B cell (primary cell): ENCODE measurements at regions of chrX and their contacts with region 1.

Region 1: DNA sequence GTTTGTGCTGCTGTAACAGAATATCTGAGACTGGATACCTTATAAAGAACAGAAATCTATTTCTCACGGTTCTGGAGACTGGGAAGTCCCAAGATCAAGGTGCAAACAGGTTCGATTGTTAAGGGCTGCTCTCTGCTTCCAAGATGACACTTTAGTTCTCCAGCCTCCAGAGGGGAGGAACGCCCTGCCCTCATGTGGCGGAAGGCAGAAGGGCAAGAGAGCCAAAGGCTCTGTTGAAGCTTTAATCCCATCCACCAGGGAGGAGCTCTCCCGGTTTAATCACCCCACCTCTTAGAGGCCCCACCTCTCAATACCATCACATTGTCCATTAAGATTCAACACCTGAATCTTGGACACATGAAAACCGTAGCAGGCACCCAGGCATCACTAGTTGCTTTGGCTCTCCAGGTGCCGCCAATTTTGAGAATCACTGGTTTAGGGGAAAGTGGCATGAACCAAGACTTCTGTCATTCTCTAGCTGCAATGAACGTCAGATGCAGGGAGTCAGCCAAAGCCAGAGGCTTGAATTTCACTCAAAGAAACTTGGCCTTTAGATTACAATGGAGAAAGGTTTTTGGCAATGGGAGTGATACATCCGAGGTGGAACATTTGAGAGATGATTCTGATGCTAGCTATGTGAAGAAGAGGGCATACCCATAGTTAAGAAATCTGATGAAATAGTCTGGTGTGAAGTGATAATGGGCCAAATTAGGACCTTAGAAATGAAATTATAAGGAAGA is 15.7 kb downstream of the FHL1 start:
- DNase-seq: peak; percentile 40
- ATAC-seq: peak; percentile 49
- H3K4me3 ChIP-seq: no peak overlapping the region
- H3K4me3 Mint-ChIP-seq: no peak overlapping the region
- H3K27ac ChIP-seq: no peak overlapping the region
- H3K27ac Mint-ChIP-seq: no peak overlapping the region
- H3K4me1 ChIP-seq: no peaks in the 10 kb centered on the region
- H3K4me1 Mint-ChIP-seq: no peaks in the 10 kb centered on the region
- H3K27me3 ChIP-seq: no peaks in the 10 kb centered on the region
- H3K27me3 Mint-ChIP-seq: no peaks in the 10 kb centered on the region
- CTCF ChIP-seq: peak; percentile 43

Region 2: GRCh38 chrX:136183917-136184316 is 20.9 kb after region 1 on chrX:
- CTCF ChIA-PET with region 1: no interaction called
- POLR2A ChIA-PET with region 1: no interaction called
- intact Hi-C with region 1: no loop called
- DNase-seq: no peak
- ATAC-seq: no peak
- H3K4me3 ChIP-seq: no peak overlapping the region
- H3K4me3 Mint-ChIP-seq: no peak overlapping the region
- H3K27ac ChIP-seq: no peak overlapping the region
- H3K27ac Mint-ChIP-seq: no peak overlapping the region
- H3K4me1 ChIP-seq: no peaks in the 10 kb centered on the region
- H3K4me1 Mint-ChIP-seq: no peaks in the 10 kb centered on the region
- H3K27me3 ChIP-seq: peaks cover 0 to 3% (median 0%) of the 10 kb centered on the region in 4 experiments
- H3K27me3 Mint-ChIP-seq: no peaks in the 10 kb centered on the region
- CTCF ChIP-seq: no peak

Region 3: GRCh38 chrX:136196691-136197155 is 33.7 kb after region 1 on chrX:
- CTCF ChIA-PET with region 1: no interaction called
- POLR2A ChIA-PET with region 1: no interaction called
- intact Hi-C with region 1: no loop called
- DNase-seq: no peak
- ATAC-seq: no peak
- H3K4me3 ChIP-seq: no peak overlapping the region
- H3K4me3 Mint-ChIP-seq: no peak overlapping the region
- H3K27ac ChIP-seq: no peak overlapping the region
- H3K27ac Mint-ChIP-seq: no peak overlapping the region
- H3K4me1 ChIP-seq: peaks cover 14 to 19% of the 10 kb centered on the region in 2 donors
- H3K4me1 Mint-ChIP-seq: peaks cover 26% of the 10 kb centered on the region
- H3K27me3 ChIP-seq: no peaks in the 10 kb centered on the region
- H3K27me3 Mint-ChIP-seq: no peaks in the 10 kb centered on the region
- CTCF ChIP-seq: no peak

Region 4: GRCh38 chrX:136214551-136214950 is 51.5 kb after region 1 on chrX:
- CTCF ChIA-PET with region 1: no interaction called
- POLR2A ChIA-PET with region 1: no interaction called
- intact Hi-C with region 1: loop called (anchors 10 kb)
- DNase-seq: no peak
- ATAC-seq: no peak
- H3K4me3 ChIP-seq: no peak overlapping the region
- H3K4me3 Mint-ChIP-seq: no peak overlapping the region
- H3K27ac ChIP-seq: no peak overlapping the region
- H3K27ac Mint-ChIP-seq: no peak overlapping the region
- H3K4me1 ChIP-seq: peaks cover 27 to 34% of the 10 kb centered on the region in 2 donors
- H3K4me1 Mint-ChIP-seq: peaks cover 30% of the 10 kb centered on the region
- H3K27me3 ChIP-seq: no peaks in the 10 kb centered on the region
- H3K27me3 Mint-ChIP-seq: no peaks in the 10 kb centered on the region
- CTCF ChIP-seq: no peak

Region 5: DNA sequence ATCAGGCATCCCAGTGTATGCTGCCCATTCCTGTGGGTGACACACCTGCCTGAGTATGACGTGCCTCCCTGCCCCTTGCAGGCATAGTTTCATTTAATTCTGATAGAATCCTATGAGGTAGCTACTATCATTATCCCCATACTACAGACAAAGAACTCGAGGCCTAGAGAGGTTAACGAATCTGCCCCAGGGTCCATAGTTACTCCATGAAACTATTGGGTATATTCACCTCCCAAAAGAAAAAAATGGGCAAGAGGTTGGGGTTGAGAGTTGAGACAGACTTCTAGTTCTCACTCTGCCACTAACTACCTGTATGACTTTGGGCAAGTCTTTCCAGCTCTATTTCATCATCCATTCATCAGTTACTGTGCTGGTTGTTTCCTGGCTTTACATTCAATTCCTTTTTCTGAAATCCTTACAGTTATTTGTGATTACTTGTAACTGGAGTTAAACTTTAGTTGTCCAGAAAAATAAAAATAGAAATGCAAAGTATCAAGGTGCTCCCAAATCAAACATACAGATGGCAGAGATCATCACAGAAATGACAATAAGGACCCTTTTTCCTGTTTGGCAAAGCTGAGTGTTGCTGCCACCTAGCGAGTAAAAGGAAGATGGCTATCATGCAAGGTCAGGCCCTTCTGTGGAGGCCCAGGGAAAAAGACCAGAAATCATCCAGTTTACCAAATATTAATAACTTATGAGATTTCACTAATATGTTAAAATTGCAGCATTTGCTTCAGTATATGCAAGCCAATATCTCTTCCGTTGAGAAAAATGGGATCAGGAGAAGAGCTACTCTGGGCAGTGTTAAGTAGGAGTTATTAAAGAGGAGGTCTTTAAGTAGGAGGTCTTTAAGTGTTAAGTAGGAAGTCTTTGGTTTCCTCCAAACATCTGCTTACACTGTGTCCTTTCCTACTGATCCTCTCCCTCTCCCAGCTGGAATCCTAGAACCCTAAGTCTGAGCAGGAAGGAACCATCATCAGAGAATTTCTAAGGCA is 105.3 kb after region 1 on chrX:
- CTCF ChIA-PET with region 1: interaction called, 9 read pairs
- POLR2A ChIA-PET with region 1: no interaction called
- intact Hi-C with region 1: loop called (anchors 5 kb)
- DNase-seq: peak; percentile 58
- ATAC-seq: no peak
- H3K4me3 ChIP-seq: no peak overlapping the region
- H3K4me3 Mint-ChIP-seq: no peak overlapping the region
- H3K27ac ChIP-seq: no peak overlapping the region
- H3K27ac Mint-ChIP-seq: no peak overlapping the region
- H3K4me1 ChIP-seq: peaks cover 7 to 10% of the 10 kb centered on the region in 2 donors
- H3K4me1 Mint-ChIP-seq: peaks cover 12% of the 10 kb centered on the region
- H3K27me3 ChIP-seq: no peaks in the 10 kb centered on the region
- H3K27me3 Mint-ChIP-seq: no peaks in the 10 kb centered on the region
- CTCF ChIP-seq: peak; percentile 82